ENCODE measurements at regions of chr13 and their contacts with region 1.

Region 1: DNA sequence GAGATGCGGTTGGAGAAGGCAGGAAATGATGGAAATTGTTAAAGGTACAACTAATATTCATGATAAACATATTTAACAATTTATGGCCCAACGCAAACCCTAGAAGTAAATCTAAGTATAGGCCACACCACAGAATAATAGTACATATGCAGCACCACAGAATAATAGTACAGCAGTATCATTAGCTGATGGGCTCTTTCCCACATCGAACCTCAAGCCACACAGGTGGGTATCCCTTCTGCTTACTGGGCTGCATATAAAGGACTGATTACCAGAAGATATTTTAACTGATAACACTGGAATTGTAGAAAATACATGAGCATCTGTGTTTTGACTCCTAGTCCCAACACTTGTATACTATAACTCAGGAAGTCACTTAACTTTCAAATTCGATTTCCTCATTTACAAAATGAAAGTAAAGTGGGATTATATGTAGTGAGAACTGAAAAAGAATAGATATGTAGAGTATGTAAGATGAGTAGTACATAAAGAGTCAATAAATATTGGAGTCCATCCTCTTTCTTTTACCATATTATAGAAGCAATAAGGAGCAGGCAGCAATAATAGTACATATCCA is 91.5 kb downstream of the TSC22D1 start:
- ATAC-seq: no peak
- H3K4me3 ChIP-seq: no peak overlapping the region
- H3K27ac ChIP-seq: no peak overlapping the region
- H3K4me1 ChIP-seq: no peaks in the 10 kb centered on the region

Region 2: GRCh38 chr13:44293908-44294735 is 190.5 kb before region 1 on chr13:
- in situ Hi-C with region 1: no loop called
- ATAC-seq: peak in 4 of 8 experiments; percentile 30 to 76 (median 52)
- H3K4me3 ChIP-seq: no peak overlapping the region
- H3K27ac ChIP-seq: no peak overlapping the region
- H3K4me1 ChIP-seq: peaks cover 5 to 14% of the 10 kb centered on the region in 2 donors

Region 3: DNA sequence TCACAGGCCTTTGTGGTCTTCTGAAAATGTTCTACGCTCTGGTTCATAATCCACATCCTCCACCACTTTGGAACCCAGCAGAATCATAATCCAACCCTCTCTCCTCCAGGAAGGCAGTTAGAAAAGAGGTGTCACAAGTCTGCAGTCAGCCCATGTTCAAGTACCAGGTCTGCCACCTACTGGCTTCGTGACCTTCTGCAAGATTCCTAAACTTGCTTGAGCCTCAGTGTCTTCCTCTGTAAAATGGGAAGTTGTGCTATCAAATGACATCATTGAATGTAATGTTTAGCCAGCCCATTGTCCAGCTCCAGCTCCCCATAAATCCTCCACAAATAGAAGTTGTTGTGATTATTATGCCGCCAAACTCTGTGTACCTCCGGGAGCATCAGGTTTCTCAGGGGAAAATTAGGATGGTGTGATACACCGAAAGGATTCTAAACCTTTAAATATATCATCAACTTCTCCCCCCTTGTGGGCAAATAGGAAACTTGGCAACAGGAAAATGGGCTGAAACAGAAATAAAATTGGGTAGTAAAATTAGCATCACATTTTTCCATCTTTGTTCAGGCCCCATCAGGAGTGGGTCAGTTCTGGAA is 394.9 kb after region 1 on chr13:
- in situ Hi-C with region 1: loop called in 2 of 9 experiments (anchors 25 kb)
- ATAC-seq: peak in 2 of 8 experiments; percentile 63 to 68
- H3K4me3 ChIP-seq: no peak overlapping the region
- H3K27ac ChIP-seq: no peak overlapping the region
- H3K4me1 ChIP-seq: no peaks in the 10 kb centered on the region

Region 4: DNA sequence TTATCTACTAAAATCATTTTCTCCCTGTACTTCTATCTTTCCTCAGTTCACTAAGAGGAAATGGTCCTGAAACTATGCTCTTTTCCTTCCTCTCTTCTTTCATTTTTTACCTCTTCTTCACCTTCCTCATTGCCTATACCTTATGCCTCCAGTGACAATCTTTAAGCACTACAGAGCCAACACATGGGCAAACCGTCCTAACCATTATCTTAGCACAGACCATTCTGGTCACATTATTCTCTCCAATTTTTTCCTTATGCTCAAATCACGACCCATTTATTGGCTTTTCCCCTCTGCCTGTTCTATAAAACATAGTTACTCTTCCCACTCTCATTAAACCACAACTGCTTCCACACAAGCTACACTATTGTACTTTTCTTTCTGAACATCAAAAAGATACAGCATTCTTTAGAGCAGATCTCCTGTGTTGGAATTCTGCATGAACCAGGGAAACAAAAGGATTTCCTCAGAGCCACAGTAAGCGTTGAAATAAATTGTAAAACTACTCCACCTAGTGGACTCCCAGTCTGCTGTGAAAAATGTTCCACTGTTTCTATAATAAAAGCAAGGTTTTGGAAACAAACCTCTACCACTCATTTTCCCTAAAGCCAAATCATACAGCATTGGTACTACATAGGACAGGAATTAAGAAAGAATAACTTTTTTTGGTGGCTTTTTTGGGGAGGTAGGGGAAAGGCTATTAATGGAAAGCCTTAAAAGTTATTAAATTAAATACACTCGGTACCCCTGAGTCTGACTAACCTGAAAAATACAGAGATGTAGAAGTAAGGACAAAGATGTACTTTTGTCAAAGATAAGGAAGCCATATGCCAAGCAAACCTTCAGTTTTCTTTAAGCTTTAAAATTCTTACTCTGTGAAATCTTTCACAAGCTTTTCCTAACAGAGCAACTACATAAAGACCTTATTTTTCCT is 485.2 kb after region 1 on chr13:
- in situ Hi-C with region 1: loop called in 8 of 9 experiments (anchors 10 to 25 kb)
- ATAC-seq: peak; percentile 57 to 89 (median 81)
- H3K4me3 ChIP-seq: no peak overlapping the region
- H3K27ac ChIP-seq: no peak overlapping the region
- H3K4me1 ChIP-seq: peaks cover 4 to 19% of the 10 kb centered on the region in 2 donors

Region 5: DNA sequence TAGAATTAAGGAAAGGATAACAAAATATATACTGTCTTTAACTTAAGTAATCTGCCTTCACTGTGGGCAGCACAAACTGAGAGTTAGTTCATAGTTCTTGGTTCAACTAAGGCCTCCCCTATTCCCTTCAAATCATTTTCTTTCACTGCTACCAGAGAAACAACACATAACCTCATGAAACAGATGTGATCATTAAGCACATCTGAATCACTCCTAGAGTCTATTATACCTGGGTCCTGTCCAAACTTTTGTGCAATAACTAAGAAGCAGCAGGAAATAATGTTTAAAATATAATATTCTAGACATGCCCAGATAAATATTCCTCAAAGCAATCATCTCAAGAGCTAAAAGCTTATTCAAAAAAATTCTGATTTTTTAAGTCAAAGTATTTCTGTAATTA is 1505.0 kb after region 1 on chr13:
- in situ Hi-C with region 1: no loop called
- ATAC-seq: peak in 1 of 8 experiments; percentile 33
- H3K4me3 ChIP-seq: no peak overlapping the region
- H3K27ac ChIP-seq: no peak overlapping the region
- H3K4me1 ChIP-seq: no peaks in the 10 kb centered on the region